ENCODE measurements at regions of chr1 and their contacts with region 1.

Region 1: DNA sequence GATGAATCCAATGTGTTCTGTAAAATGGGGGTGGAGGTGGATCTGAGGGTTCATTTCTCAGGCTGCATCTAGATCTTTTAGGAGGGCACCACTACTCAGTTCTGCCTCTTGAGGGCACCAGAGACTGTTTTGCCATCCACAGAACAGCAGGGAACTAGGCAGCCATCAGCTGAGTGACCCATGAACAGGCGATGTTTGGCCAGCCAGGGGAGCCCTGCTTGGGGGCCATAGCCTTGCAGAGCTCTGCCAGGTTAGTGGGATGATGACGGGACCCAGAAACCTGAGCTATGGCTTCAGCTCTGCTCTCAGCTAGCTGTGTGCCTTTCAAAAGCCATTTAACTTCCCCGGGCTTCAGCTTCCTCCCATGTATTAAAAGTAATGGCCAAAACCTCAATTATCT is 13.4 kb upstream of the NOS1AP start:
- DNase-seq: peak; percentile 64 to 87
- H3K4me3 ChIP-seq: no peak overlapping the region
- H3K27ac ChIP-seq: no peak overlapping the region
- H3K4me1 ChIP-seq: no peaks in the 10 kb centered on the region
- H3K27me3 ChIP-seq: no peaks in the 10 kb centered on the region
- CTCF ChIP-seq: peak; percentile 77 to 99 (median 97)
- EP300 ChIP-seq: no peak
- POLR2A ChIP-seq: no peak
- RAD21 ChIP-seq: peak; percentile 100

Region 2: DNA sequence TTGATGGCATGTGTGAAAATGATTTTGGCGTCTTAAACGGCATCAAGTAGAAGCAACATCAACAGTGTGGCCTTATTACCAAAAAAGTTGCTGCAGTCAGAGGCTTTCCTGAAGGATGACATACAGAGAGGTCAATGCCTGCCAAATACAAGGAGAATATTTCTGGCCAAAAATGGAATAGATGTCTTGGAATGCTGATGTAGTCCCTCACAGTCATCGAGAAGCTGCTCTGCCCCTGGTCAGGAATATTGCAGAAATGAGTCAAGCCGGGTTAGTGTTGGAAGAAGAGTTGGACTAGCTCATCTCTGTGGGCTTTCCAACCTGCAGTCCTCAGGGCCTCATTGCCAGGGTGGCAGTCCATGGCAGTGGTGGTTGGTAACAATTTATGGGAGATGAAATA is 55.5 kb after region 1 on chr1:
- CTCF ChIA-PET with region 1: no interaction called
- POLR2A ChIA-PET with region 1: no interaction called
- DNase-seq: no peak
- H3K4me3 ChIP-seq: no peak overlapping the region
- H3K27ac ChIP-seq: no peak overlapping the region
- H3K4me1 ChIP-seq: no peaks in the 10 kb centered on the region
- H3K27me3 ChIP-seq: no peaks in the 10 kb centered on the region; a peak in 1 of 7 replicates
- CTCF ChIP-seq: no peak
- EP300 ChIP-seq: no peak
- POLR2A ChIP-seq: no peak
- RAD21 ChIP-seq: no peak

Region 3: DNA sequence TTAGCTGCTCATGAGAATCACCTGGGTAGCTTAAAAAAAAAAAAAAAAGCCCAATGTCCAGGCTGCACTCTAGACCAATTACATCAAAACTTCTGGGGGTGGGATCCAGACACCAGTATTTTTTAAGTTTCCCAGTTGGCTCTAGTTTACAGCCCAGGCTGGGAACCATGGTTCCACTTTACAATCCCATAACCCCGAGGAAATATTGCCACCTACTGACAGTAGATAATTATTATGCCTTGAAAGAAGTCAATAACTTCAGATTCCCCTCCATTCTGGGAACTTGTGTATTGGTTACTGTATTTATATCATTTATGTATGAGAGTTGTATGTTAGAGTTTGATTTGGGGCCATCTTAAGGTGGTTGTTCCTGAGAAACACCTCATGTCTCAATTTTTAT is 220.4 kb after region 1 on chr1:
- CTCF ChIA-PET with region 1: interaction called, 13 read pairs
- POLR2A ChIA-PET with region 1: no interaction called
- DNase-seq: no peak
- H3K4me3 ChIP-seq: no peak overlapping the region
- H3K27ac ChIP-seq: no peak overlapping the region
- H3K4me1 ChIP-seq: no peaks in the 10 kb centered on the region
- H3K27me3 ChIP-seq: no peaks in the 10 kb centered on the region
- CTCF ChIP-seq: peak in 2 of 3 experiments; percentile 15 to 34; a peak in 2 of 4 replicates
- EP300 ChIP-seq: no peak
- POLR2A ChIP-seq: no peak
- RAD21 ChIP-seq: peak; percentile 61 to 63

Region 4: DNA sequence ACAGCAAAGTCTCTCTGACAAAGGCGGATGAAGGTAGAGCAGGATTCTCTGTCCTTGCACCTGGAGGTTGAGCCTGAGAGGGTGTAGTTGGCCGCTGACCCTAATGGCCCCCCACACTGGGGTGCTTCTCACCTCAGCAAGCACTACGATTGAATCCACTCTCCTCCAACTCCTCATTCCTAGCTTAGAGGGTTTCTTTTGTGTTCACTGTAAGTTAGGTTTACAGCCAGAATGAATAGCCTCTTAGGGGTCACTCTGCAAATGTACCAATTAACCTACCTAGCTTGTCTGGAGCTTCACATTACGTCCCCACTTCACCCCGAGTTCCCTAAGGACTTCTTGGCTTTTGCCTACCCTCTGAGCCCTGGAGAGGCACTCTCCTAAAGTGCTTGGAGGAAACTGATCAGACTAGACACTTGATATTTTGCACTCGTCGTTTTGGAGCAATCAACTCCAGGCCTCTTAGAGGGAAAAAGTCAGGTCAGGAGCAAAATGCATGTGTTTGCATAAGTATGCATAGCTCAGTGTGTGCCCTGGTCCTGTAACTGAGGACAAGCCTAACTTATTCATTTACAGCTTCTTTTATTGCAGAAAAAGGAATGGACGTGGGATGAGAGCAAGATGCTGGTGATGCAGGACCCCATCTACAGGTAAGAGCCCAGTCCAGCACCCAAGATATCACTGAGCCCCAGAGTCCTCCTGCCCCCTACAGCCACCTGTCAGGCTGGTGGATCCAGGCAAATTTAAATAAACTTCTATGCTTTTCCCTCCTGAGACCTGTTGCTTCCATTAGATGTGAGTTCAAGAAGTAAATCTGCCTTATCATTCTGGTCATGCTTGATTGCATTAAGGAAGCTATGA is 244.2 kb after region 1 on chr1:
- CTCF ChIA-PET with region 1: interaction called, 10 read pairs
- POLR2A ChIA-PET with region 1: no interaction called
- DNase-seq: no peak
- H3K4me3 ChIP-seq: no peak overlapping the region
- H3K27ac ChIP-seq: peak overlapping the region; percentile 70; the same call in 1 of the 2 replicates
- H3K4me1 ChIP-seq: peaks cover 0 to 9% (median 6%) of the 10 kb centered on the region in 4 experiments; a peak in 5 of 7 replicates
- H3K27me3 ChIP-seq: no peaks in the 10 kb centered on the region
- CTCF ChIP-seq: peak; percentile 38 to 72 (median 42)
- EP300 ChIP-seq: no peak
- POLR2A ChIP-seq: no peak
- RAD21 ChIP-seq: peak; percentile 58 to 64

Region 5: DNA sequence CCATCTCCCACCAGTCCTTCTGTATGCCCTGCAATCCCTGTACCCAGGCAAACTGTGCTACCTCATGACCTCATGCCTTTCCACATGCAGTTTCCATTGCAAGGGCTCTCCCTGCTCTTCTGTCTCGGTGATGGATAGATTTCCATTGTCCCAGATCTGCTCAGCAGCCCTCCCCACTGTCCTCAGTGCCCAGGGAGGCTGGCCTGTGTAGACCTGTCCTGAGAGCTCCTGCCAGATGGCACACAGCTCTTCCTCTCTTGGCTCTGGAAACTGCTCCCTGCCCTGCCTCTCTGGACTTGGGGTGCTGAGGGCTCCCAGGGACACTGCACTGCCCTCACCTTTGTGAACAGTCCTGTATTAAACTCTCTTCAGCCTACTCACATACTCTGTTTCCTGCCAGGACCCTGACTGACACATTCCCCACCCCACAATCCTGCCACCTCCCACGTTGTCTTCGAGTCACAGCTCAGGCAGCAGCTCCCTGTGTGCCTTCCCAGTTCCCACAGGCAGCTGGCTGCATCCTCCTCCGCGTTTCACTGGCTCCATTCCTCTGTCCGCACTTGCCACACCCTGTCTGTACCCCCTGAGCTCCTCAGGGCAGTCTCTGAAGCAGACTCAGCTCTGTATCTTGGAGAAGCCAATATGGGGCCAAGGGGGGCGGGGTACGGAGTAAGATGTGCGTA is 263.6 kb after region 1 on chr1:
- CTCF ChIA-PET with region 1: interaction called, 10 read pairs
- POLR2A ChIA-PET with region 1: no interaction called
- DNase-seq: no peak
- H3K4me3 ChIP-seq: no peak overlapping the region
- H3K27ac ChIP-seq: no peak overlapping the region
- H3K4me1 ChIP-seq: no peaks in the 10 kb centered on the region
- H3K27me3 ChIP-seq: no peaks in the 10 kb centered on the region
- CTCF ChIP-seq: no peak
- EP300 ChIP-seq: no peak
- POLR2A ChIP-seq: no peak
- RAD21 ChIP-seq: no peak

Region 6: GRCh38 chr1:162391790-162392563 is 335.9 kb after region 1 on chr1:
- CTCF ChIA-PET with region 1: interaction called, 32 read pairs
- POLR2A ChIA-PET with region 1: no interaction called
- DNase-seq: peak in 1 of 2 experiments; percentile 40
- H3K4me3 ChIP-seq: no peak overlapping the region
- H3K27ac ChIP-seq: no peak overlapping the region
- H3K4me1 ChIP-seq: peaks cover 0 to 6% (median 1%) of the 10 kb centered on the region in 4 experiments; a peak in 4 of 7 replicates
- H3K27me3 ChIP-seq: no peaks in the 10 kb centered on the region
- CTCF ChIP-seq: peak in 2 of 3 experiments; percentile 63 to 69; a peak in 3 of 4 replicates
- EP300 ChIP-seq: no peak
- POLR2A ChIP-seq: no peak
- RAD21 ChIP-seq: peak; percentile 81 to 83

Measured in H1 (cell line).